ENCODE measurements at regions of chr5 and their contacts with region 1.

Region 1: DNA sequence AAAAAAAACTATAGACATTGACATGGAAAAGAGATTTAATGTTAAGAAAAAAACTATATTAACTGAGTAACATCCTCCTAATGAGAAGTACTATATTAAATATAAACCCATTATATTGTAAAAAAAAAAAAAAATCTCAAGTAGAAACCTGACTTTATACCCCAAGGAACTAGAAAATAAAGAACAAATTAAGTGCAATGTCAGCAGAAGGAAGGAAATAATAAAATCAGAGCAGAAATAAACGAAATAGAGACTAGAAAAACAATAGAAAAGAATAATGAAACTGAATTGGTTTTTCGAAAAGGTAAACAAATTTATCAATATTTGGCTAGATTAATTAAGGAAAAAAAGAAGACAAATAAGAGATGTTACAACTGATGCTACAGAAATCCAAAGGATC is 329.1 kb upstream of the ZNF608 start:
- DNase-seq: no peak
- H3K4me3 Mint-ChIP-seq: no peak overlapping the region
- H3K27ac Mint-ChIP-seq: no peak overlapping the region
- H3K4me1 Mint-ChIP-seq: no peaks in the 10 kb centered on the region
- H3K27me3 Mint-ChIP-seq: peaks cover 1% of the 10 kb centered on the region

Region 2: GRCh38 chr5:126093041-126093440 is 1017.5 kb after region 1 on chr5:
- intact Hi-C with region 1: loop called (anchors 5 kb)
- DNase-seq: no peak
- H3K4me3 Mint-ChIP-seq: no peak overlapping the region
- H3K27ac Mint-ChIP-seq: no peak overlapping the region
- H3K4me1 Mint-ChIP-seq: no peaks in the 10 kb centered on the region
- H3K27me3 Mint-ChIP-seq: no peaks in the 10 kb centered on the region

Measured in activated T-helper 1 cell treated with anti-CD3 and anti-CD28 coated beads, Interleukin-12 subunit alpha, Interleukin-12 subunit beta, Interleukin-2, Interleukin-4 antibody, amounts not matched to agents 30 ng/mL and 10 ng/mL and 1 ng/mL, durations not matched to agents 14 hours and 24 hours and 36 hours (primary cell).